Common myeloid progenitor, CD34-positive (primary cell): ENCODE measurements at regions of chr1 and their contacts with region 1.

Region 1: DNA sequence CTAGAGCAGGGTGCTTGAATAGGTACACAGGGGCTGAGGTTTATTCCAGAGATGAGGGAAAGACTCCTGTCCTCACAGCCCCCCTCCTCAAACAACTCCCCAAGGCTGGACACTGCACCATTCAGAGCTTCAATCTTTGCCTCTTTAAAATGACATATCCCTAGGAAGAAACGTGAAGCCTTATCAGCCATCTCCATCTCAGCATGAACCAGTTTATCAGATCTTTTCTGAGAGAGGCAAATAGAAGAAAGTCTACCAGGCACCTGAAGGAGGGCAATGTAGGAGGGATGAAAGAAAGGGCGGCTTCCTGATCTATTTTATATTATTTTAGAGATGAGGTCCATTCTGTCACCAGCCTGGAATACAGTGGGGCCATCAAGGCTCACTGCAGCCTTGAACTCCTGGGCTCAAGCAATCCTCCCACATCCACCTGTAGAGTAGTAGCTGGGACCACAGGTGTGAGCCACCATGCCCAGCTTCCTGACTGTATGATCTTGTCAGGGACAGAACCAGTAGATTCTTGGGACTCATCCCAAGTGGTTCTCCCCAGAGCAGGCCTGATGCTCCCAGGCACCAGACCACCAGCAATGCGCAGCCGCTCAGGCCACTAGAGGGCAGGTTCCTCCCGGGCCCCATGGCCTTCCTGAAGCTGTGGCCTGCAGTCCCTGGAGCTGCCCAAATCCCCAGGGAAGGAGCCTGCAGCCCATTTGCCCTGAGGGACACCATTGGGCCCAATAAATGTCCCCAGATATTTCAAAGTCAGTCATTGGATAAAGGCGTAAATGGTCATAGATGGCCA is 44.4 kb upstream of the GOLT1A start:
- DNase-seq: peak; percentile 43 to 51 (median 46)
- H3K4me3 ChIP-seq: no peak overlapping the region
- H3K27ac ChIP-seq: no peak overlapping the region
- H3K4me1 ChIP-seq: peaks cover 0 to 14% (median 3%) of the 10 kb centered on the region in 4 experiments
- H3K27me3 ChIP-seq: no peaks in the 10 kb centered on the region

Region 2: GRCh38 chr1:204162231-204163074 is 95.7 kb before region 1 on chr1:
- CTCF ChIA-PET with region 1: interaction called, 17 read pairs
- POLR2A ChIA-PET with region 1: no interaction called
- DNase-seq: peak; percentile 67 to 82 (median 75)
- H3K4me3 ChIP-seq: no peak overlapping the region
- H3K27ac ChIP-seq: no peak overlapping the region
- H3K4me1 ChIP-seq: peaks cover 2 to 20% (median 18%) of the 10 kb centered on the region in 4 experiments
- H3K27me3 ChIP-seq: no peaks in the 10 kb centered on the region

Region 3: DNA sequence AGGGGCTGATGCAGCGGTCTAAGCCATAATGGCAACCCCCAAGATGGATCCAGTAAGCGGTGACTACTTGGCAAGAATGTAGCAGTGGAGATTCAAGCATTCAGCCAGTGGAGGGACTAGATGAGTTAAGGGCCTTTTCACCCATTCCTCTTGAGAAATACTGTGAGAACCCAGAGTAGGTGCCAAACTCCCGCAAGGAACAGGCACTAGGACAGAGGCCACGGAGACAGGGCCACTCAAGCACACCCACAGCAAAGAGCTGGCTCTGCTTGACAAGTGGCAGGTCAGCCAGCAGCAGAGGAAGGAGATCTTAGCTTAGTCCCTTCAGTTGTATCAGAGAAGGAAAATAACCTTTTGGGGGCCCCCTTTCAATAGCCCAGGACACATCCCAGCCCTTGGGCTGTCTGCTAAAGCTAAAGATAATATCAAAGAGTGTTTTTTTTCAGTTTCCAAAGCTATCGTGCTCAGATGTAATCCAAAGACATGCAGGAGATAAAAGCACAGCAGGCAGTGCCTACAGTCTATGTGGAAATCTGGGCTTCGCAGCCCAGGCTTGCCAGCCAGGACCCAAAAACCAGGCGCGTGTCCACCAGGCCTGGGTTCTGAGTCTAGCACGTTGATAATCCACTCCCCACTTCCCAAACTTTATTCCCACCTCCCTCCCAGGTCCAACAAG is 17.7 kb after region 1 on chr1:
- CTCF ChIA-PET with region 1: interaction called, 32 read pairs
- POLR2A ChIA-PET with region 1: no interaction called
- DNase-seq: no peak
- H3K4me3 ChIP-seq: no peak overlapping the region
- H3K27ac ChIP-seq: no peak overlapping the region
- H3K4me1 ChIP-seq: peaks cover 13 to 73% (median 62%) of the 10 kb centered on the region in 4 experiments
- H3K27me3 ChIP-seq: no peaks in the 10 kb centered on the region

Region 4: DNA sequence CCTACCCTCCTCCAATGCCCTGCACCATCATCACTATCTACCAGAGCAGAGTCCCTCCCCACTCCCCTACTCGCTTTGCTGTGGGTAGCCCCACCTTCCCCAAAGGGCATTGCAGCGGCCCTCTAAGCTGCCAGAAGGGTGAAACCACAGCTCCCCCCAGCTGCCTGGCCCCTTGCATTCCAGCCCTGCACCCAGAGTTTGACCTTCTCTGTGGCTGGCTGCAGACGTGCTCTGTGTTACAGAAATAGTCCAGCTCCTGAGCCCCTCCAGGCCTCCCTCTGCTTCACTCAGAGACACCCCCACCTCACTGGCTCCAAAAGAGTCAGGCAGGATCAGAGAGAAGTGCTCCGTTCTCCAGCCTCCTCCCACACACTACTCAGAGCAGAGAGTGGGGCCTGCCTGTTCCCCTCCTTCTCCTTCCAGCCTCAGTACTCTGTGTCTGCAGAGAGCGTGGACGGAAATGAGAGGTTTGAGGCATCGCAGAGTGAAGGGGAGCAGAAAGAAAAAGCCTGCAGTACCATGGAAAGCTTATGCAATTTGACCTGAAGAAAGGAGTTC is 38.4 kb after region 1 on chr1:
- CTCF ChIA-PET with region 1: interaction called, 34 read pairs
- POLR2A ChIA-PET with region 1: no interaction called
- DNase-seq: peak in 2 of 3 donors; percentile 40 to 58
- H3K4me3 ChIP-seq: peak overlapping the region in 2 of 7 experiments; percentile 21 to 35
- H3K27ac ChIP-seq: no peak overlapping the region
- H3K4me1 ChIP-seq: peaks cover 3 to 19% (median 17%) of the 10 kb centered on the region in 4 experiments
- H3K27me3 ChIP-seq: no peaks in the 10 kb centered on the region

Region 5: GRCh38 chr1:204350857-204351573 is 92.9 kb after region 1 on chr1:
- CTCF ChIA-PET with region 1: interaction called, 12 read pairs
- POLR2A ChIA-PET with region 1: no interaction called
- DNase-seq: peak in 2 of 3 donors; percentile 78 to 83
- H3K4me3 ChIP-seq: no peak overlapping the region
- H3K27ac ChIP-seq: no peak overlapping the region
- H3K4me1 ChIP-seq: peaks cover 3 to 25% (median 19%) of the 10 kb centered on the region in 4 experiments
- H3K27me3 ChIP-seq: no peaks in the 10 kb centered on the region